ENCODE measurements at regions of chr1 and their contacts with region 1.

Region 1: DNA sequence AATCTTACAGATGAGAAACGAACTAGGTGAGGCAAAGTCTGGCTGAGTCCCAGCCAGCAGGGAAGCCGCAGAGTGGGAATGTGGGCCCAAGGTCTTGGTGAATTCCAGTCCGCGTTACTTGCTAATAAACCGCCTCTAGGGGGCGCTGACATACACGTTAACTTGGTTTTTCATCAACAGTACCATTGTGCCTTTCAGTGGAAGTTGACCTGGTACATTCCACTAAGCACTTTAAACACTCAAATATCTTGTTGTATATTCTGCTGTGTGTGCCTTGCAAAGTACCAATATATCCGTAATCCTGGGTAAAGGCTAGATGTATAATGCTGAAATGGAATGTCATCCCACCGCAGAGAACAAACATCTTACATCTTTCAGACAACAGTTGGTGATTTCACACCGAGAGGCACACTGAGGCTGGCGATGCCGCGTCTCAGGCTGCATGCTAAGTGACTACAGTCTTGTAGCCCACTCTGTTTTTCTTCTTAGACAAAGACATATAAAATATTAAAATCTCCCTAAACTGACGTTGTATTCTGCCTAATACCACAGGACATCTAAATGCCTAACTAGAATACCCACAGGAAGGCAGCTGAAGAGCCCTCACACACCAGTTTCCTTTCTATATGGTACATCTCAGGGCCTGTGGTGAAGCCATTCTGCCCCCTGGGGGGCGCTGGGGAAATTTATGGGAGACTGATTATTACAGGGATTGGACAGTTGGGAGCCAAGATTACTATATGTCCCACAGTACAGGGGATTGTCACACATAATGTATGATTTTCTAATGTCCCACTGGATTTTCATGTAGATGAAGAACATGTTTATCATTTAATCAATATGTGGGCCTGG is 49.2 kb upstream of the C1orf198 start:
- DNase-seq: peak; percentile 26
- H3K4me3 ChIP-seq: no peak overlapping the region
- H3K27ac ChIP-seq: no peak overlapping the region
- H3K27me3 ChIP-seq: no peaks in the 10 kb centered on the region
- CTCF ChIP-seq: peak; percentile 82

Region 2: GRCh38 chr1:230647321-230647720 is 270.2 kb before region 1 on chr1:
- CTCF ChIA-PET with region 1: no interaction called
- POLR2A ChIA-PET with region 1: no interaction called
- DNase-seq: no peak
- H3K4me3 ChIP-seq: no peak overlapping the region
- H3K27ac ChIP-seq: no peak overlapping the region
- H3K27me3 ChIP-seq: no peaks in the 10 kb centered on the region
- CTCF ChIP-seq: no peak

Region 3: GRCh38 chr1:230797942-230798418 is 119.5 kb before region 1 on chr1:
- CTCF ChIA-PET with region 1: interaction called, 140 read pairs
- POLR2A ChIA-PET with region 1: no interaction called
- DNase-seq: peak; percentile 52
- H3K4me3 ChIP-seq: no peak overlapping the region
- H3K27ac ChIP-seq: no peak overlapping the region
- H3K27me3 ChIP-seq: peaks cover 4% of the 10 kb centered on the region
- CTCF ChIP-seq: peak; percentile 90

Region 4: GRCh38 chr1:230825063-230825721 is 92.3 kb before region 1 on chr1:
- CTCF ChIA-PET with region 1: interaction called, 10 read pairs
- POLR2A ChIA-PET with region 1: no interaction called
- DNase-seq: peak; percentile 46
- H3K4me3 ChIP-seq: no peak overlapping the region
- H3K27ac ChIP-seq: peak overlapping the region; percentile 74
- H3K27me3 ChIP-seq: peaks cover 3% of the 10 kb centered on the region
- CTCF ChIP-seq: no peak

Region 5: GRCh38 chr1:230899841-230900251 is 17.7 kb before region 1 on chr1:
- CTCF ChIA-PET with region 1: interaction called, 16 read pairs
- POLR2A ChIA-PET with region 1: no interaction called
- DNase-seq: peak; percentile 66
- H3K4me3 ChIP-seq: no peak overlapping the region
- H3K27ac ChIP-seq: peak overlapping the region; percentile 42
- H3K27me3 ChIP-seq: no peaks in the 10 kb centered on the region
- CTCF ChIP-seq: no peak

Region 6: DNA sequence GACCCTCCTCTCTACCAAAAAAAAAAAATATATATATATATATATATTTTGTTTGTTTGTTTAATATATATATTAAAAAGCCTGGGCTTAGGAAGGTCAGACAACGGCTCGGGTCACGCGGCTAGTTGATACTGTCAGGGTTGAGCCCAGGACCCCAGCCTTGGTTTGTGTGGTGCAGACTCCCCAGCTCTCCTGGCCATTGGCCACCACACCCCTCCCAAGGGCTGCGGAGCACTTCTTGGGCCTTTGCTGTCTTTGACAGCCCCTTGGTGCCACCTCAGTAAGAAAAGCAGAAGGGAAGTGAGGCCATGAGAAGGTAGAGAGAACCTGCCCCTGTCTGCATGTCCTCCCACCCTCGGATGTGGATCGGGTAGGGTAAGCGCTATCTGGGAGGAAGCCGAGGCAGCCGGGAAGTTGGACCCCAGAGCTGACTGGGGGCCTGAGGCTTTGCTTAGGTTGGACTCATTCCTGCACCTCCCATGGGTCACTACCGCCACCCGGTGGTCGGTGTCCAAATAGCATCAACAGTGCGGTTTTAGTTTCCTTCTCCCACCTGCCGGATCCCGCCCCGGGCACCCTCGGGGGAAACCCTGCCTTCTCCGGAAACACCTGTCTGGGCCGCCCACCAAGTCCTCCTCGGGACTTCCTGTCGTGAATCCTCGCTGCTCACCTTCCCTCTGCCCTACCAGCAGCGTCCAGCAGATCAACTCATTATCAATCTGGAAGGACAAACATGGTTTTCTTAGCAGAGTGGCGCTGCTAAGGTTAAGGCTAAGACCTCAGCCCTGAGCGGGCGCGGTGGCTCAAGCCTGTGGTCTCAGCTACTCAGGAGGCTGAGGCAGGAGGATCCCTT is 293.7 kb after region 1 on chr1:
- CTCF ChIA-PET with region 1: interaction called, 25 read pairs
- POLR2A ChIA-PET with region 1: no interaction called
- DNase-seq: peak; percentile 27
- H3K4me3 ChIP-seq: peak overlapping the region; percentile 61
- H3K27ac ChIP-seq: no peak overlapping the region
- H3K27me3 ChIP-seq: peaks cover 21% of the 10 kb centered on the region
- CTCF ChIP-seq: peak; percentile 94